ENCODE measurements at regions of chr11 and their contacts with region 1.

Region 1: GRCh38 chr11:10366568-10367370 is 61.9 kb downstream of the ADM start:
- DNase-seq: peak; percentile 88
- H3K4me3 Mint-ChIP-seq: peak overlapping the region; percentile 11
- H3K27ac Mint-ChIP-seq: peak overlapping the region; percentile 9
- H3K4me1 Mint-ChIP-seq: peaks cover 12% of the 10 kb centered on the region
- H3K27me3 Mint-ChIP-seq: peaks cover 13% of the 10 kb centered on the region
- CTCF ChIP-seq: peak; percentile 82

Region 2: DNA sequence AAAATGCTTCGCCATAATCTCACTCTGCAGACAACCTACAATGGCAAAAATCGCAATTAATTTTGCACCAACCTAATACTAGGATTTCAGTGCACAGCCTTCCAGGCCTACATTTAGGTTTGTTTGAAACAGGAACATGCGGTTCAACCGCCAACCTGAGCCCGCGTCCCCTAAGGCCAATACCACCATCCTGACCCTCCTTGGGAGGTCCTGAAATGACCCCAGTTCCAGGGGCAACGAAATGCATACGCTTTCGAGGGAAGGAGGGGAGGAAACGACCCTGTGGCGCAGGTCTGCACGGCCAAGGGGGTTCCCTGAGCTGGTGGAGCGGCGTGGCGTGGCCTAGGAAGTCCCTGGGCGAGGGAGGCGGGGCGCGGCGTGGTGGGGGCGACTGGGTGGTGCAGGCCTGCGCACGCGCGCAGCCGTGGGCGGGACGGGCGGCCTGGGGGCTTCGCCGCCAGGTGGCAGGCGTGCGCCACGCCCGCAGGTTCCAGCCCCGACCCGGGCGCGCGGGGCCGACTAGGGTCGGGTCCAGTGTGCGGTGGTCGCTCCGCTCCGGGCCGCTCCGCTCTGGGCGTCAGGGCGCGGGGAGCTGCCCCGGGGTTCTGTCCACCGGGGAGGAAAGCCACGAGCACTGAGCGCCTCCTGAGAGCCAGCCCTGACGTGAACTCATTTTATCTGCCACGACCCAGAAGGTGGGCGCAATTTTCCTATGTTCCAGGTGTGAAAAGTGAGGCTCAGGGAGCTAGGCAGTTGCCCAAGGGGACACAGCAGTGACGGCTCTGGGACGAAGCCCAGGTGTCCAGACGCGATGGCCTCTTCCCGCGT is 608.7 kb before region 1 on chr11:
- CTCF ChIA-PET with region 1: interaction called, 4 read pairs
- intact Hi-C with region 1: loop called (anchors 5 kb)
- DNase-seq: peak; percentile 87
- H3K4me3 Mint-ChIP-seq: peak overlapping the region; percentile 81
- H3K27ac Mint-ChIP-seq: peak overlapping the region; percentile 95
- H3K4me1 Mint-ChIP-seq: peaks cover 21% of the 10 kb centered on the region
- H3K27me3 Mint-ChIP-seq: no peaks in the 10 kb centered on the region
- CTCF ChIP-seq: peak; percentile 88

Region 3: DNA sequence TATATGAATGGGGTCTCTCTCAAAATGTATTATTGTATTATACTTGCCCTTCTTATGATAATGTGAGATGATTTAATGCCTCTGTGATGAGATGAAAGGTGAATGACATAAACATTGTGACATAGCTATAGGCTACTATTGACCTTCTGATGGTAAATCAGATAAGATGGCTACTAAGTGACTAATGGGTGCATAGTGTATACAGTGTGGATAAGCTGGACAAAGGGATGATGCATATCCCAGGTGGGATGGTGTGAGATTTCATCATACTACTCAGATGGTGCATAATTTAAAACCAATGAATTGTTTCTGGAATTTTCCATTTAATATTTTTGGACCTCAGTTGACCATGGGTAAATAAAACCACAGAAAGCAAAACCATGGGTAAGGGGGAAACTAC is 316.2 kb before region 1 on chr11:
- CTCF ChIA-PET with region 1: no interaction called
- intact Hi-C with region 1: no loop called
- DNase-seq: no peak
- H3K4me3 Mint-ChIP-seq: no peak overlapping the region
- H3K27ac Mint-ChIP-seq: no peak overlapping the region
- H3K4me1 Mint-ChIP-seq: peaks cover 9% of the 10 kb centered on the region
- H3K27me3 Mint-ChIP-seq: no peaks in the 10 kb centered on the region
- CTCF ChIP-seq: no peak

Region 4: GRCh38 chr11:10328314-10329090 is 38.3 kb before region 1 on chr11:
- CTCF ChIA-PET with region 1: interaction called, 4 read pairs
- intact Hi-C with region 1: loop called (anchors 5 kb)
- DNase-seq: no peak
- H3K4me3 Mint-ChIP-seq: no peak overlapping the region
- H3K27ac Mint-ChIP-seq: no peak overlapping the region
- H3K4me1 Mint-ChIP-seq: peaks cover 16% of the 10 kb centered on the region
- H3K27me3 Mint-ChIP-seq: peaks cover 16% of the 10 kb centered on the region
- CTCF ChIP-seq: no peak

Region 5: GRCh38 chr11:10351768-10352641 is 14.8 kb before region 1 on chr11:
- CTCF ChIA-PET with region 1: interaction called, 12 read pairs
- intact Hi-C with region 1: no loop called
- DNase-seq: peak; percentile 35
- H3K4me3 Mint-ChIP-seq: peak overlapping the region; percentile 7
- H3K27ac Mint-ChIP-seq: no peak overlapping the region
- H3K4me1 Mint-ChIP-seq: peaks cover 38% of the 10 kb centered on the region
- H3K27me3 Mint-ChIP-seq: peaks cover 15% of the 10 kb centered on the region
- CTCF ChIP-seq: no peak